Activated T-helper 1 cell treated with anti-CD3 and anti-CD28 coated beads, Interleukin-12 subunit alpha, Interleukin-12 subunit beta, Interleukin-2, Interleukin-4 antibody, amounts not matched to agents 30 ng/mL and 10 ng/mL and 1 ng/mL, durations not matched to agents 14 hours and 24 hours and 36 hours (primary cell): ENCODE measurements at regions of chr18 and their contacts with region 1.

Region 1: DNA sequence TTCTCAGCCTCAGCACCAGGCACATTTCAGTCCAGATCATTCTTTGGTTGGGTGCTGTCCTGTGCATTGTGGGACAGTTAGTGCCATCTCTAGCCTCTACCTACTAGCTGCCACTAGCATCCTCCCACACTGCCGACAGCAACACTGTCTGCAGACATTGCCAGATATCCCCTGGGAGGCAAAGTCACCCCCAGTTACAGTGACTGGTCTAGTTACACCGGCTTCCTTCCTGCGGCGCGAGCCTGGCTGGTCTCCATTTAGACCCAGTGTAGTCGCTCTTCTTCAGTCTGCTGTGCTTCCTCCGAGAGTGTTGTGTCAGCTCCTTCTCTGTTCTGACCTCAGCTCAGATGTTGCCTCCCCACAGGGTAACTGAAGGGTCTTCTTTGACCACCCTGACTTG is 283.1 kb downstream of the PHLPP1 start:
- DNase-seq: no peak
- H3K4me3 Mint-ChIP-seq: no peak overlapping the region
- H3K27ac Mint-ChIP-seq: no peak overlapping the region
- H3K4me1 Mint-ChIP-seq: no peaks in the 10 kb centered on the region
- H3K27me3 Mint-ChIP-seq: peaks cover 19% of the 10 kb centered on the region

Region 2: GRCh38 chr18:62982600-62983251 is 15.7 kb before region 1 on chr18:
- intact Hi-C with region 1: loop called (anchors 1 kb)
- DNase-seq: peak; percentile 28
- H3K4me3 Mint-ChIP-seq: no peak overlapping the region
- H3K27ac Mint-ChIP-seq: no peak overlapping the region
- H3K4me1 Mint-ChIP-seq: no peaks in the 10 kb centered on the region
- H3K27me3 Mint-ChIP-seq: no peaks in the 10 kb centered on the region

Region 3: DNA sequence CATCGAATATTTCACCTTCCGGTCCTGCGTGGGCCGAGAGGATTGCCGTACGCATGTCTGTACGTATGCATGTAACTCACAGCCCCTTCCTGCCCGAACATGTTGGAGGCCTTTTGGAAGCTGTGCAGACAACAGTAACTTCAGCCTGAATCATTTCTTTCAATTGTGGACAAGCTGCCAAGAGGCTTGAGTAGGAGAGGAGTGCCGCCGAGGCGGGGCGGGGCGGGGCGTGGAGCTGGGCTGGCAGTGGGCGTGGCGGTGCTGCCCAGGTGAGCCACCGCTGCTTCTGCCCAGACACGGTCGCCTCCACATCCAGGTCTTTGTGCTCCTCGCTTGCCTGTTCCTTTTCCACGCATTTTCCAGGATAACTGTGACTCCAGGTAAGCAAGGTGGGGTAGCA is 478.2 kb after region 1 on chr18 and contains the start of gene SERPINB5:
- intact Hi-C with region 1: no loop called
- DNase-seq: no peak
- H3K4me3 Mint-ChIP-seq: no peak within 1 kb of the TSS
- H3K27ac Mint-ChIP-seq: no peak within 1 kb of the TSS
- H3K4me1 Mint-ChIP-seq: no peaks in the 10 kb centered on the region
- H3K27me3 Mint-ChIP-seq: peaks cover 28% of the 10 kb centered on the region
- total RNA-seq, gene SERPINB5: not detected in 2 replicates